T-cell (primary cell): ENCODE measurements at regions of chr15 and their contacts with region 1.

Region 1: DNA sequence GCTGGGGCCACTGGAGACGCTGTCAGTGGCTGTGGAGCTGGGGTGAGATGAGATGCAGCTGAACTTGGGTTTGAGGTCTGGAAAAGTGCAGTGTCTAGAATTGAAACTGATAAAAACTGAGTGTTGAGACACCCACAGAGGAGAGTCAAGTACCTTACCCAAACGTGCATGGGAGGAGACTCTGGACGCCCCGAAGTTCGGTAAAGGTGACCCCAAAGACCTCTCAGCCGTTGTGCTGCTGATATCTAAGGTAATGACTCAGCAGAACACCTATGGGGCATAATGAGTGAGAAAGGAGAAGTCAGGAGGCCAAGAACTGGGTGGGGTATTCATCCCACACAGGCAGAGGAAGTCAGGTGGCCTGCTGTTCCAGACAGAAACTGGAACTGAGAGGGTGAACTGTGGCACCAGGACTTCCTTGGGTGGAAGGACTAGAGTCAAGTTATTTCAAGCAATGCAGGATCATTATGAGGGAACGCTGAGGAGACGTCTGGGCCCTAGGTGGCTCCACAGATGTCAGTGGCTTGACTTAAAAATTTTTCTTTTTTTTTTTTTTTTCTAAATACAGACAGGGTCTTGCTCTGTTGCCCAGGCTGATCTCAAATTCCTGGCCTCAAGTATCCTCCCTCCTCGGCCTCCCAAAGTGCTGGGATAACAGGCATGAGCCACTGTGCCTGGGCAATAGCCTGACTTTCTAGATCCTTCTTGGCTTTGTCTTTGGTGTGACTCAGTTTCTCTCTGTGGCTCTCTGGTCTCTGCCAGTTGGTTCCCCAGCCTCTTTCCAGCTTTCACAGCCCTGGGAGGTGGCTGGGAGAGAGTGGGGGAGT is 67.6 kb upstream of the GCNT3 start:
- DNase-seq: peak in 1 of 35 experiments; percentile 20
- ATAC-seq: no peak
- H3K4me3 ChIP-seq: no peak overlapping the region
- H3K4me3 Mint-ChIP-seq: no peak overlapping the region
- H3K27ac ChIP-seq: no peak overlapping the region
- H3K27ac Mint-ChIP-seq: no peak overlapping the region
- H3K4me1 ChIP-seq: no peaks in the 10 kb centered on the region
- H3K4me1 Mint-ChIP-seq: peaks cover 6 to 9% (median 7%) of the 10 kb centered on the region in 3 donors
- H3K27me3 ChIP-seq: peaks cover 0 to 29% of the 10 kb centered on the region in 2 experiments
- H3K27me3 Mint-ChIP-seq: peaks cover 3 to 7% of the 10 kb centered on the region in 2 donors

Region 2: GRCh38 chr15:59399465-59400102 is 144.3 kb before region 1 on chr15:
- CTCF ChIA-PET with region 1: no interaction called
- POLR2A ChIA-PET with region 1: no interaction called
- DNase-seq: peak in 1 of 35 experiments; percentile 43
- ATAC-seq: no peak
- H3K4me3 ChIP-seq: no peak overlapping the region
- H3K4me3 Mint-ChIP-seq: no peak overlapping the region
- H3K27ac ChIP-seq: no peak overlapping the region
- H3K27ac Mint-ChIP-seq: no peak overlapping the region
- H3K4me1 ChIP-seq: no peaks in the 10 kb centered on the region
- H3K4me1 Mint-ChIP-seq: peaks cover 0 to 8% (median 7%) of the 10 kb centered on the region in 3 donors
- H3K27me3 ChIP-seq: peaks cover 0 to 24% of the 10 kb centered on the region in 2 experiments
- H3K27me3 Mint-ChIP-seq: peaks cover 15 to 24% of the 10 kb centered on the region in 2 donors

Region 3: DNA sequence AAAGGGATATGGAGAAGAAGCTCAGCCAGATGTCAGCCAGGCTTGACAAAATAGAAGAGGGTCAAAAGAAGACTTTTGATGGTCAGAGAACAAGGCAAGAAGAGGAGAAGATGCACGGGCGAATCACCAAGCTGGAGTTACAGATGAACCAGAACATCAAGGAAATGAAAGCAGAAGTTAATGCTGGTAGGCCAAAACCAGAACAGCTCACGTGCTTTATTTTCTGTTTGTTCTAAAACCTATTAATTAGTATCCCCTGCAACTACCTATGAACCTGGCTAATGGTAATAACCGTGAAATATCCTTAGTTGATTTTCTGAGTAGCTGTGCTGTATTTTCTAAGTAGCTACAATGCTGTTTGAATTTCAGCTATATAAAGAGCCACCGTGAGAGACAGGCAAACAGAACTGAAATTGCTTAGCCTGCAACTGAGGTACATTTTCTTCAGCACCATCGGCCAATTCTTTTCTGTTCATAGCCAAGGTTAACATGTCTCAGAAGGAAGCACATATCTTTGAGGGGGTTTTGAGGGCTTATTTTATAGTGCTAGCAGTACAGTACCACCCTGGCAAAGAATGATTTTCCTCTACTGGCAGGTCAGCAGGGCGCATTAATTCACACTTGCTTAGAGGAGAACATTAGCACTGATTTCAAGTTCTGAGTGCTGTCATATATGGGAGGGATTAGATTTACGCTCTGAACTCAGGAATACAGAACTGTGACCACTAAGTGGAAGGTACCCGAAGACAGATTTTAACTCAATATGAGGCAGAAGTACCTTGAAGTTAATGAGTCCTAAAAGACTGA is 27.1 kb before region 1 on chr15:
- CTCF ChIA-PET with region 1: no interaction called
- POLR2A ChIA-PET with region 1: no interaction called
- DNase-seq: no peak
- ATAC-seq: no peak
- H3K4me3 ChIP-seq: no peak overlapping the region
- H3K4me3 Mint-ChIP-seq: no peak overlapping the region
- H3K27ac ChIP-seq: no peak overlapping the region
- H3K27ac Mint-ChIP-seq: peak overlapping the region in 1 of 2 donors; percentile 50
- H3K4me1 ChIP-seq: no peaks in the 10 kb centered on the region
- H3K4me1 Mint-ChIP-seq: peaks cover 0 to 19% (median 3%) of the 10 kb centered on the region in 3 donors
- H3K27me3 ChIP-seq: peaks cover 0 to 3% of the 10 kb centered on the region in 2 experiments
- H3K27me3 Mint-ChIP-seq: no peaks in the 10 kb centered on the region

Region 4: DNA sequence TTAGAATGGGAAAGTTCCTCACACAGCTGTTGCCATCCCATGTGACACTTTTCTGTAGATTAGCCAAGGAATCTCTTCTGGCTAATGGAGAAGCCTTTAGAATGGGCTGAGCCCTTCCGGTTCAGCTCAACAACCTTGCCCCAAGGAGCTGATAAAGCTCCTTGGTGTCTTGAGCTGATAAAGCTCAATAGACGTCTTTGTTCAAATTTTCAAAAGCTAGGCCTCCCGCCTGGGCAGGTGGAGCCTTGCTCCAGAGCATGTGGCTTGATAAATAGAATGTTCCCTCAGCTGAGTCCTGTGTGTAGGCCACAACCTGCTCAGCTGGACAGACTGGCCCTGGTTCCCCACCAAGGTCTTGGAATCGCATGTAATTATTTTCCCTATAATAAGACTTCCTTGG is 152.4 kb after region 1 on chr15:
- CTCF ChIA-PET with region 1: no interaction called
- POLR2A ChIA-PET with region 1: interaction called in 1 of 2 experiments, 13 read pairs
- DNase-seq: no peak
- ATAC-seq: no peak
- H3K4me3 ChIP-seq: no peak overlapping the region
- H3K4me3 Mint-ChIP-seq: no peak overlapping the region
- H3K27ac ChIP-seq: no peak overlapping the region
- H3K27ac Mint-ChIP-seq: no peak overlapping the region
- H3K4me1 ChIP-seq: no peaks in the 10 kb centered on the region
- H3K4me1 Mint-ChIP-seq: peaks cover 0 to under 1% (median 0%) of the 10 kb centered on the region in 3 donors
- H3K27me3 ChIP-seq: no peaks in the 10 kb centered on the region
- H3K27me3 Mint-ChIP-seq: peaks cover 3 to 4% of the 10 kb centered on the region in 2 donors